Activated T-helper 1 cell treated with anti-CD3 and anti-CD28 coated beads, Interleukin-12 subunit alpha, Interleukin-12 subunit beta, Interleukin-2, Interleukin-4 antibody, amounts not matched to agents 30 ng/mL and 10 ng/mL and 1 ng/mL, durations not matched to agents 14 hours and 24 hours and 36 hours (primary cell): ENCODE measurements at regions of chrX and their contacts with region 1.

Region 1: GRCh38 chrX:120499301-120500072 is 30.4 kb upstream of the LAMP2 start:
- DNase-seq: no peak
- H3K4me3 Mint-ChIP-seq: no peak overlapping the region
- H3K27ac Mint-ChIP-seq: no peak overlapping the region
- H3K4me1 Mint-ChIP-seq: peaks cover 6% of the 10 kb centered on the region
- H3K27me3 Mint-ChIP-seq: no peaks in the 10 kb centered on the region

Region 2: DNA sequence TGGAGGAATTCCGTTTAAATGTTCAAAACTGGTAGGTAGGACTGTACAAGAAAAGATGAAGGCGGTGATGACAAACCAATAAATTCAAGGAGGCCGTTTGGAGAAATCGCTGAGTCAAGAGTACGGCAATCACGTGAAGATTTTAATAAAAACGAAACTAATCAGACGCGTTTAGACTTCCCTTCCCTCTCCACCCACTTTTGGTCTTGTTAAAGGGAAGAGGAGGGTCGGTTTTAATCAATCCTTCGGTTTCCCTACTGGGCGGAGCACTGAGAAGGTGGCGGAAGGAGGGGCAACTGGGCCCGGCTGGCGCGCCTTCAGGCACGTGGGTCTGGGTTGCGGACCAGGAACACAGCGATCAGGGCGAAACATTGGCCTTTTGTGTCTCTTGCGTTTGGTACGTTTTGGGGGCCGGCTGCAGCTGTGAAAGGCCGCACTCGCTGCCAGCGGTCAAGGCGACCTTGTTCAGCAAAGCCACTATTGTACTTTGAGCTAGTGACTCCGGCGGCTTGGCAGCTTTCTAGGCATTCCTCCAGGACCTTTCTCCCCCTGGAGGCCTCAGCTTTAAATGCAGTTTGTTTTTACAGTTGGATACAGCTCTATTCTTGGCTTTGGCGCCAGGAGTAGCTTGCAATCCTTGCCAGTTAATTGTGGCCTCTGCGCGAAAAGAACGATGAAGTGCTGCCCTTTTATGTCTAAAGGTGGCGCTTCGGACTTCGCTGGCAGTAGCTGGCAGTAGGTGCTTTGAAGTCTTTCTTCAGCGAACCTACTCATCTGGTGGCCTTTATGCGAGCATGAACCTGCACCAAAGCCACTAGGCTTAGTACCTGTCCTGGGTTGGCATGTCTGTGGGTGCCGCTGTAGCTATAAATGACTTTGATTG is 13.6 kb before region 1 on chrX:
- intact Hi-C with region 1: loop called (anchors 1 kb)
- DNase-seq: peak; percentile 40
- H3K4me3 Mint-ChIP-seq: peak overlapping the region; percentile 77
- H3K27ac Mint-ChIP-seq: peak overlapping the region; percentile 76
- H3K4me1 Mint-ChIP-seq: peaks cover 12% of the 10 kb centered on the region
- H3K27me3 Mint-ChIP-seq: no peaks in the 10 kb centered on the region

Region 3: GRCh38 chrX:120603707-120604360 is 104.3 kb after region 1 on chrX and contains the start of gene MCTS1:
- intact Hi-C with region 1: loop called (anchors 1 kb)
- DNase-seq: peak; percentile 75
- H3K4me3 Mint-ChIP-seq: peak within 1 kb of the TSS; percentile 99
- H3K27ac Mint-ChIP-seq: peak within 1 kb of the TSS; percentile 99
- H3K4me1 Mint-ChIP-seq: peaks cover 10% of the 10 kb centered on the region
- H3K27me3 Mint-ChIP-seq: no peaks in the 10 kb centered on the region
- total RNA-seq, gene MCTS1: 67.3 and 70.1 TPM in 2 replicates

Region 4: GRCh38 chrX:120769576-120770341 is 270.3 kb after region 1 on chrX:
- intact Hi-C with region 1: loop called (anchors 1 kb)
- DNase-seq: no peak
- H3K4me3 Mint-ChIP-seq: no peak overlapping the region
- H3K27ac Mint-ChIP-seq: no peak overlapping the region
- H3K4me1 Mint-ChIP-seq: no peaks in the 10 kb centered on the region
- H3K27me3 Mint-ChIP-seq: no peaks in the 10 kb centered on the region

Region 5: GRCh38 chrX:121160987-121161386 is 661.5 kb after region 1 on chrX:
- intact Hi-C with region 1: loop called (anchors 10 kb)
- DNase-seq: no peak
- H3K4me3 Mint-ChIP-seq: peak overlapping the region; percentile 54
- H3K27ac Mint-ChIP-seq: peak overlapping the region; percentile 86
- H3K4me1 Mint-ChIP-seq: peaks cover 35% of the 10 kb centered on the region
- H3K27me3 Mint-ChIP-seq: peaks cover 2% of the 10 kb centered on the region